ENCODE measurements at regions of chr1 and their contacts with region 1.

Region 1: DNA sequence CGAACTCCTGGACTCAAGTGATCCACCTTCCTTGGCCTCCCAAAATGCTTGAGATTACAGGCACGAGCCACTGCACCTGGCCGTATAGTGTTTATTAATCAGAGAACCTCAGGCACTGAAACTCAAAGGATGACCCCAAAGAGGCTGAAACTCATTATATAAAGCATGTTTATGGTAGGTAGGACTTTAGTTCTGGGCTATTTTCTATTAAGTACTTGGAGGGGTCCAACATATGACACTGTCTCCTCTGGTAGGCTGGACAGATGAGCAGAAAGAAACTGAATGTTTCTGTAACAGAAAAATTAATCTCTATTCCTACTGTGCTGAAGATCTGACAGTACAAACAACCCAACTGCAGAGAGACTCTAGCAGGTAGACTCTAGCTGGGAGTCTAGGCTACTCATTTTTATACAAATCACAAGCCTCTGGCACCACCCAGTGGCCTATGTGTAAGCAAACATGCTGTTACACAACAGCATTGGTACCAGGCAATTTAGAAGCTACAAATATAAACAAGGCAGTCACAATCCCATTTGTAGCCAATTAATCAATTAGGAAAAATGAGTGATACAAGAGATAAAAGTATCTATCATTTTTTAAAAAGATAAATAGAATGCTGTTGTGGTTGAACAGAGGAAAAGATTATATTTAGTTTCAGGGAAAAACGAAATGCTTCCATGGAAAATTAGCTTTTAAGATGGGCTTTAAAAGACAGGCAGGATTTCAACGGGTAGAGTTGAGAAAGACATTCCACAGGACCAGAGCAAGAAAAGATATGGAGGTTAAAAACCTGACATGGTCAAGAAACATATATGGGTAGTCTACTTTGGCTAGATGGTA is 10.4 kb downstream of the DCAF8 start:
- DNase-seq: peak; percentile 70 to 73
- ATAC-seq: peak; percentile 98 to 99
- H3K4me3 ChIP-seq: no peak overlapping the region
- H3K27ac ChIP-seq: no peak overlapping the region
- H3K4me1 ChIP-seq: peaks cover 16% of the 10 kb centered on the region
- CTCF ChIP-seq: peak; percentile 77
- EP300 ChIP-seq: no peak
- POLR2A ChIP-seq: no peak
- RAD21 ChIP-seq: peak; percentile 83 to 85

Region 2: GRCh38 chr1:159991513-159991912 is 260.4 kb before region 1 on chr1:
- CTCF ChIA-PET with region 1: no interaction called
- POLR2A ChIA-PET with region 1: no interaction called
- DNase-seq: peak in 1 of 2 experiments; percentile 11
- ATAC-seq: peak in 1 of 2 experiments; percentile 55; a peak in 3 of 6 replicates
- H3K4me3 ChIP-seq: no peak overlapping the region
- H3K27ac ChIP-seq: no peak overlapping the region
- H3K4me1 ChIP-seq: peaks cover 6% of the 10 kb centered on the region; the same call in 2 of the 3 replicates
- CTCF ChIP-seq: no peak
- EP300 ChIP-seq: no peak
- POLR2A ChIP-seq: no peak
- RAD21 ChIP-seq: no peak

Region 3: DNA sequence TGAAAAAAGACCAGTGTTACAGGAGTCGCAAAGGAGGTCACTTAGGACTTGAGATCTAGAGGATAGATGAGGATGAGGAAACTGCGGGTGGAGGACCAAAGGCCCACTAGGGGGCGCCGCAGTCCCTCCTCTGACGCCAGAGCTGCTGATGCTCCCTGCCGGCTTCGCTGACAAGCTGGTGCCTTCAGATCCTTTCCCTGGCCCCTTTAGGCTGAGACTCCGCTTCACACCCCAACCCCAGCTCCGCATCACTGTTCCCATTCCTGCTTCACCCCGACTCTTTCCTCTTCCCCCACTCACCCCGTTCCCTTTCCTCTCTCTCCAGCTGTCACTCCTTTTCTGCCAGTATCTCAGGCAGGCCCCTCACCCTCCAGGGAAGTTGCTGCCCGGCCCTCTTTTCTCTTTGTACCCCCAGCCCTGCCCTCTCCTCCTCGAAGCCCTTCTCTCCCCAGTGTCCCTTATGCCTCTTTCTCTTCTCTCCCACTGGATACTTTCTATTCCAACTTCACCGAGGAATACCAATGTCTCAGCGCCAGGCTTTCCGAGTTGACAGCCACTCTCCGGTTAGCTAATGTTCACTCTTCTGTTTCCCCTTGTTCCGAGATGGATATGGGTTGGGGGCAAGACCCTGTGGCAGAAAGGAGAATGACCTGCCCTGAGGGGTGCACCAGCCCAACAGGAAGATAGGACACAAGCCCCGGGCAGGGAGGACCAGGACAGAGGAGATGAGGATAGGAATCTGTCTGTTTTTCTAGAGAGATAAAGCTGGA is 166.0 kb before region 1 on chr1:
- CTCF ChIA-PET with region 1: interaction called, 35 read pairs
- POLR2A ChIA-PET with region 1: no interaction called
- DNase-seq: peak; percentile 83 to 94
- ATAC-seq: peak; percentile 72 to 88
- H3K4me3 ChIP-seq: no peak overlapping the region
- H3K27ac ChIP-seq: no peak overlapping the region
- H3K4me1 ChIP-seq: 0 out of 3 replicates have a peak, but pooled peaks cover 2% of the 10 kb centered on the region
- CTCF ChIP-seq: peak; percentile 82
- EP300 ChIP-seq: no peak
- POLR2A ChIP-seq: no peak
- RAD21 ChIP-seq: peak; percentile 70 to 72

Region 4: DNA sequence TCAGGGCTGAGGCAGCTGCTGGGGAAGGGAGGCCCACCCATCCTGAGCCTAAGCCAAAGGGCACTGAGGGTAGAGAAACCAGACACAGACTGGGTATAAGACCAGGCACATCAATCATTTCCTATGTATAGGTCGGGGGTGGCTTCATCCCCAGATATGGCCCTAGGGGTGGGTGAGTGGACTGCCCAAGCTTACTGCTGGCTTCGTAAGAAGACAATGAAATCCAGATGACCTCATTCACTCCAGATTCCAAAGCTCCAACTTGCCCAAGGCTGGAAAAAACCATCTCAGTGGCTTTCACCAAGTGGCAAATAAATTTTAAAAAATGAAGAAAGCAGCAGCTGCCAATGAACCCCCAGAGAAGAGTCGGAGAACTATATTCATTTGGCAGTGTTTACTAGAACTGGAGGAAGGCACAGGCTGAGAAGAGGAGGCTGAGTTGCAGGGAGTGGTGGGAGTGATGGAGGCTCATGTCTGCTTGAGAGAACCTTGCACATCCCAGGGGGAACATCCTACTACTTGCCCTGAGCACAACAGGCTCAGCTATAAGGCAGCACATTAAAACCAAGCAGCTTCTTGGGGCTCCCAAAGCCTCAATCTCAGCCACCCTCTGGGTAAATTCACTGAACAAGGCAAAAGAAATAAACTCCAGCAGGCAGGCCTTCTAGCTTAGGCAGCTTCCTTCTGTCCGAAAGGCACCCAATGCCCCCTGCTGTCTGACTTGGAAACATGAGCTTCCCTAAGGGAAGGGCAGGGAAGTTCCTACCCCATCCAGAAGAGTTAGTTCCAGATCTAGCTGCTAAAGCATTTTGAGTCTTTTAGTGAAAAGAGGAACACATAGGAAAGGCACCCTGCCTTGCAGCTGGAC is 32.6 kb before region 1 on chr1:
- CTCF ChIA-PET with region 1: interaction called, 26 read pairs
- POLR2A ChIA-PET with region 1: no interaction called
- DNase-seq: peak; percentile 55 to 70
- ATAC-seq: peak; percentile 87 to 88
- H3K4me3 ChIP-seq: no peak overlapping the region
- H3K27ac ChIP-seq: 0 out of 6 replicates have a peak overlapping the region, but pooled peaks of 1 of the 2 experiments have one; percentile 5
- H3K4me1 ChIP-seq: peaks cover 19% of the 10 kb centered on the region; the same call in 2 of the 3 replicates
- CTCF ChIP-seq: peak; percentile 61
- EP300 ChIP-seq: no peak
- POLR2A ChIP-seq: no peak
- RAD21 ChIP-seq: peak; percentile 72 to 74

Region 5: GRCh38 chr1:160232911-160233310 is 19.0 kb before region 1 on chr1:
- CTCF ChIA-PET with region 1: interaction called, 26 read pairs
- POLR2A ChIA-PET with region 1: no interaction called
- DNase-seq: no peak
- ATAC-seq: no peak
- H3K4me3 ChIP-seq: no peak overlapping the region
- H3K27ac ChIP-seq: no peak overlapping the region
- H3K4me1 ChIP-seq: no peaks in the 10 kb centered on the region
- CTCF ChIP-seq: no peak
- EP300 ChIP-seq: no peak
- POLR2A ChIP-seq: no peak
- RAD21 ChIP-seq: no peak

Region 6: DNA sequence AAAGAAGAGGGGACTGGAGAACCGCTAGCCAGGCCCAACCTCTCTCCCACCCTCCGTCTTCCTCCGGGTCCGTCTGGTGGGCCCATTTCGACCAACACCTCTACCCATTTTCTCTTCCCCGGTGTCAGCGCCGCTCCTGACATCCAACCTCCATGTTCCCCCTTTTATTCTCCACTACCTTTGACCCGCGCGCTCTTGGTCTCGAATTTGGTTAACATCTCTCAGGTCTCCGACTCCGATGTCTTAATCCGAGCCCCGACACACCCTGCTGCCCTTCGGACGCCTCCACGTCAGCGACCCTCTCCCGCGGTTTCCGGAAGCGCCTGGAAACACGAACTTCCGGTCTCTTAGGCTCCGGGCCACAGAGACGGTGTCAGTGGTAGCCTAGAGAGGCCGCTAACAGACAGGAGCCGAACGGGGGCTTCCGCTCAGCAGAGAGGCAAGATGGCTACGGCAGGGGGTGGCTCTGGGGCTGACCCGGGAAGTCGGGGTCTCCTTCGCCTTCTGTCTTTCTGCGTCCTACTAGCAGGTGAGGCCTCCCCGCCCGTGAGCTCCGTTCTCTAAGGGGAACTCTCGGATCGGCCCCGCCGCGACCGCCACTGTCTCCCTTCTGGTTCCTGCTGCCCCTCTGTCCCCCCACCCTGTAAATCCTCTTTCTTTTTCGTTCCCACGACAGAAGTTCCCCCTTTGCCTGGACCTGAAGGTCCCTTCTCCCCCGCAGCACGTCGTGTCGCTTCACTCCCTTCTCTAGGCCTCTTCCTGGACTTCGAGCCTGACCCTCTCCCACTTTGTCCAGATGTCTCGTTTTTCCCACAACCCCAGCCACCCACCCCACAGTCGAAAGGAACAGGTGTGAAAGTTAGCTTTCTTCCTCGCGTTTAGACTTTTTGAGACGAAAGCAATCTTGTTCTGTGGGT is 91.3 kb after region 1 on chr1 and contains the starts of genes COPA and NCSTN:
- CTCF ChIA-PET with region 1: no interaction called
- POLR2A ChIA-PET with region 1: no interaction called
- DNase-seq: peak; percentile 90 to 96
- ATAC-seq: peak; percentile 99 to 100
- H3K4me3 ChIP-seq: peak within 1 kb of the TSS; percentile 93
- H3K27ac ChIP-seq: peak within 1 kb of the TSS; percentile 92 to 93
- H3K4me1 ChIP-seq: peaks cover 20% of the 10 kb centered on the region
- CTCF ChIP-seq: no peak
- EP300 ChIP-seq: no peak
- POLR2A ChIP-seq: peak; percentile 76
- RAD21 ChIP-seq: no peak
- polyA plus RNA-seq, gene COPA: 149 and 188 TPM in 2 replicates
- polyA plus RNA-seq, gene NCSTN: 90.4 and 91.6 TPM in 2 replicates

Region 7: GRCh38 chr1:160376525-160377131 is 124.7 kb after region 1 on chr1:
- CTCF ChIA-PET with region 1: interaction called, 10 read pairs
- POLR2A ChIA-PET with region 1: no interaction called
- DNase-seq: peak; percentile 65 to 76
- ATAC-seq: peak; percentile 80 to 93
- H3K4me3 ChIP-seq: no peak overlapping the region
- H3K27ac ChIP-seq: no peak overlapping the region
- H3K4me1 ChIP-seq: no peaks in the 10 kb centered on the region
- CTCF ChIP-seq: peak; percentile 96
- EP300 ChIP-seq: no peak
- POLR2A ChIP-seq: no peak
- RAD21 ChIP-seq: peak; percentile 84 to 94

Region 8: GRCh38 chr1:160618763-160619274 is 366.9 kb after region 1 on chr1:
- CTCF ChIA-PET with region 1: no interaction called
- POLR2A ChIA-PET with region 1: no interaction called
- DNase-seq: peak; percentile 31 to 51
- ATAC-seq: peak in 1 of 2 experiments; percentile 53; a peak in 2 of 6 replicates
- H3K4me3 ChIP-seq: no peak overlapping the region
- H3K27ac ChIP-seq: no peak overlapping the region
- H3K4me1 ChIP-seq: no peaks in the 10 kb centered on the region
- CTCF ChIP-seq: peak; percentile 13; the same call in 1 of the 3 replicates
- EP300 ChIP-seq: no peak
- POLR2A ChIP-seq: no peak
- RAD21 ChIP-seq: no peak

Measured in A549 (cell line).